ENCODE measurements at regions of chr4 and their contacts with region 1.

Region 1: DNA sequence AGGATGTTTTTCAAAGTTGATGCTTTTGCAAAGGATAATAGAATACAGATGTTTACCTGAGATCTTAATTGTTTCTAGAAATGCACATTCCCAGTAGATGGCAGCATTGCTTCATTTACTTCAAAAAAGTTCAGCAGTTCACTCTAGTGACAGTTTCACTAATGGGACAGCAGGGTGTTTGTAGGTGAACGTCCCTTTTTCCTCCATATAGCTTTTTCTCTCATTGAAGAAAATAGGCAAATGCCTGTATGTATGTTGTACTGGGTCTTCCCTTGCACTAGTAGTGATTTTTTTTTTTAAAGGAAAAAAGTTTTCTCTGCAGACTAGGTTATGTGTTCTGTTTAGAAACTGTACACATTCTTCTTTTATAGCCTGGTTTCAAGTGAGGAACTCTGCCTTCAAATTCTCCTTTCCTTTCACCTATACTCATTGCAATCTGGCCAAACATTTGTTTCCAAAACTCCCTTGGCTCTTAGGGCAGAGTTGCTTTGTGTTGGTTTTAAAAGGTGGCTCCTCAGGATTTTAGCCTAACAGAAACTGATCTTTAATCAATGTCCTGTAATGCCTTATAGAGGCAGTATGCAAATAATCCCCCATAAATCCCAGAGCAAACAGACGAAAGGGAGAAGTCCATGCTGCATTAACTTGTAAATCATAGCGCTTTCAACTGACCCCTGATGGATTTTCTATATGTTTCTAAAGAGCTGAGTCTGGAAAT is 86.3 kb downstream of the EGF start:
- DNase-seq: peak; percentile 42 to 76 (median 50)
- ATAC-seq: peak; percentile 91
- H3K4me3 ChIP-seq: no peak overlapping the region
- H3K27ac ChIP-seq: no peak overlapping the region
- H3K4me1 ChIP-seq: no peaks in the 10 kb centered on the region; a peak in 3 of 5 replicates
- H3K27me3 ChIP-seq: no peaks in the 10 kb centered on the region
- CTCF ChIP-seq: peak; percentile 62 to 93 (median 88); a peak in 5 of 6 replicates
- EP300 ChIP-seq: no peak
- POLR2A ChIP-seq: no peak
- RAD21 ChIP-seq: peak; percentile 83 to 85

Region 2: DNA sequence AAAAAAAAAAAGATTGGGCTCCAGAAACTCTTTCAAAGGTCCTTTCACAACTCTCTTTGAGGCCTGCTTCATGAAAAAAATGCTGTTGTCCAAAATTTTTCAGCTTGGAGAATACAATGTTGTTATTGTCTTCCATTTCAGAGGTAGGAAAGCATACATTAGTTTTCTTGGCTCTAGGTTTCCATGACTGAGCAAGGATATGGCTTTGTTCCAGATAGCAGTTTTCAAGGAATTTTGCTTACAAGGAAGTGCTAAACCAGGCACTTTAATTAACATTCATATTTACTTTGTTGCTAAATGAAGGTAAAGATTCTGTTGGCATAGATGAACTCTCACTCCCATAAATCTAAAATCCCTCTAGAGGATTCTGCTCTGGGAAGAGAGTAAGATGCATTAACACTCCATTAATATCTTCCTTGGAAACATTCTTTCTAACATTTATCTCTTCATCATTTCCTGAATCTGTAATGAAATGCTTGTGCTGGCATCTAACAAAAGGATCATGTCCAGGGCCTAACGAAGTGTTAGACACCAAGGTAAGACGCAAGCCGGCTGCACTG is 815.0 kb before region 1 on chr4:
- CTCF ChIA-PET with region 1: no interaction called
- POLR2A ChIA-PET with region 1: no interaction called
- in situ Hi-C with region 1: no loop called
- intact Hi-C with region 1: no loop called
- DNase-seq: no peak
- ATAC-seq: no peak
- H3K4me3 ChIP-seq: no peak overlapping the region
- H3K27ac ChIP-seq: no peak overlapping the region
- H3K4me1 ChIP-seq: peaks cover 5 to 19% of the 10 kb centered on the region in 2 experiments; a peak in 4 of 5 replicates
- H3K27me3 ChIP-seq: no peaks in the 10 kb centered on the region
- CTCF ChIP-seq: no peak
- EP300 ChIP-seq: no peak
- POLR2A ChIP-seq: no peak
- RAD21 ChIP-seq: no peak

Region 3: DNA sequence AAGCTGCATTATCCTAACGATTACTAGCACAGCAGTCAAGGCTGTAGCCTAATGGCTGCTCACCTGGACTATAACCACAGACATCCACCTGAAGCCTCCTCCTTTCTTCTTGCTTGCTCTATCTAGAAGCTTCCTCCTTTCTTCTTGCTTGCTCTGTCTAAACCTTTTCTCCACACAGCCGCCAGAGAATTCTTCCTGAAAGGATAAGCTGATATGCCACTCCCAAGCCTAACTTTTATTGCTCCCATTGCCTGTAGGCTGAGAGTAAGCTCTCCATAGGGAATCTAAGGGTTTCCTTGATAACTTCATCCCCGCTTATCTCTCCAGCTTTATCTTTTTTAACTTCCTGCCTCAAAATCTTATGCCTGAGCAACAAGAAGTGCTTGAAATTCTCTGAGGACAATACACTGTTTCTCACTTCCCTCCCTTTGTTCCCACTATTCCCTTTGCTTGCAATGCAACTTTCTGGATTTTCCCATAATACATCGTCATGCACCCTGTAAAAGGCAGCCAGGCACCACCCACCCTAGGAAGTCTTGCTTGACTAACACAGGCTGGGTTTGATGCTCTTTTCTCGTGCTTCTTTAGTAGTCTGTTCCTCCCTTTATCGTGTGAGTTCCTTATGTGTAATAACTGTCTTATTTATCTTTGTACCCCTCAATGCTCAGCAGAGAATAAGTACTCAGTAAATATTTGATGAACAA is 152.5 kb before region 1 on chr4:
- CTCF ChIA-PET with region 1: no interaction called
- POLR2A ChIA-PET with region 1: no interaction called
- in situ Hi-C with region 1: no loop called
- intact Hi-C with region 1: no loop called
- DNase-seq: no peak
- ATAC-seq: no peak; the same call in 2 of the 3 replicates
- H3K4me3 ChIP-seq: no peak overlapping the region
- H3K27ac ChIP-seq: no peak overlapping the region
- H3K4me1 ChIP-seq: no peaks in the 10 kb centered on the region
- H3K27me3 ChIP-seq: no peaks in the 10 kb centered on the region; a peak in 2 of 5 replicates
- CTCF ChIP-seq: no peak
- EP300 ChIP-seq: no peak
- POLR2A ChIP-seq: no peak
- RAD21 ChIP-seq: no peak

Region 4: GRCh38 chr4:110516106-110516922 is 517.3 kb after region 1 on chr4:
- CTCF ChIA-PET with region 1: interaction called, 252 read pairs
- POLR2A ChIA-PET with region 1: no interaction called
- in situ Hi-C with region 1: loop called (anchors 5 kb)
- intact Hi-C with region 1: no loop called
- DNase-seq: peak; percentile 44 to 67 (median 51)
- ATAC-seq: peak; percentile 97
- H3K4me3 ChIP-seq: no peak overlapping the region
- H3K27ac ChIP-seq: no peak overlapping the region
- H3K4me1 ChIP-seq: no peaks in the 10 kb centered on the region
- H3K27me3 ChIP-seq: no peaks in the 10 kb centered on the region
- CTCF ChIP-seq: peak; percentile 69 to 81 (median 76)
- EP300 ChIP-seq: no peak
- POLR2A ChIP-seq: no peak
- RAD21 ChIP-seq: peak; percentile 31 to 48

Measured in K562 (cell line).